RWPE1 (cell line): ENCODE measurements at regions of chr7 and their contacts with region 1.

Region 1: GRCh38 chr7:37181550-37181932 is 267.1 kb downstream of the ELMO1 start:
- DNase-seq: no peak
- H3K27ac ChIP-seq: no peak overlapping the region
- CTCF ChIP-seq: no peak

Region 2: DNA sequence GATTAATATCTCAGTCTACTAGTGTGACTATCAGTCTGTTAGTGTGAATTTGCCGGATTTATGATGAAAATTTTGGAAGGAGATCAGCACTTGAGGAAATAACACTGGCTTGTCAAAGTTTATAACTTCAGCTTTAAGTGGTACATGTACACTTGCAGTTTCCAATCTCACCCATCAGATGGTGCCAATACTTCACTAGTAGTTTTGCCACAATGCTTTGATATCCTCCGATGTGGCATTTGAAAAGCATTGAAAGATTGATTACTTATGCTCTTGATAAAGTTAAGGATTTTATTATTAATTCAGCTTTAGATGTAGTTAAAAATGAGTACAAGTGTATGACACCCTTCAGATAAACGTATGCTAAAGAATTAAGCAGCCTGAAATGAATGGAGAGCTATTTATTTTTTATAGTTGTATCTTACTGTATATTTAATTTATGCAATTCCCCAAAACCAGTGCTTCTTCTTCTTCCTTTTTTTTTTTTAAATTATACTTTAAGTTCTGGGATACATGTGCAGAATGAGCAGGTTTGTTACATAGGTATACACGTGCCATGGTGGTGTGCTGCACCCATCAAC is 693.7 kb before region 1 on chr7:
- CTCF ChIA-PET with region 1: interaction called, 16 read pairs
- POLR2A ChIA-PET with region 1: no interaction called
- DNase-seq: peak; percentile 60
- H3K27ac ChIP-seq: no peak overlapping the region
- CTCF ChIP-seq: peak; percentile 84

Region 3: DNA sequence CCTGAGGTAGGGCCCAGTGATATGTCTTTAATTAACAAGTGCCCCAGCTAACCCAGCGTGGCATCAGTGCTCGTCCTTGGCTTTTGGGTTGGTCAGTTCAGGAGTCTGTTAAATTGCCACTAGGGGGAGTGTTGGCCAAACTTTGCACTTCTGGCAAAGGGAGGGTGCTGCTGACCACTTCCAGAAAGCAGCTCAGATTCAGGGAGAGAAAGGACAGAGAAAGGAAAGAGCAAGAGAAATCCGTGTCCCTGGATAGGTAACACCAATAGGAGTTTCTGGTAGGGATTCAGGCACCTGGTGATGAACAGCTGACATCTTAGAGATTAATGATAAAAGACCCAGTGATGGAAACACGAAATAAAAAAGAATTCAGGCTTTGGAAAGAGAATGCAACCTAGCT is 214.2 kb before region 1 on chr7:
- CTCF ChIA-PET with region 1: interaction called, 67 read pairs
- POLR2A ChIA-PET with region 1: interaction called, 4 read pairs
- DNase-seq: peak; percentile 61
- H3K27ac ChIP-seq: no peak overlapping the region
- CTCF ChIP-seq: peak; percentile 82

Region 4: GRCh38 chr7:36986429-36987362 is 194.8 kb before region 1 on chr7:
- CTCF ChIA-PET with region 1: interaction called, 35 read pairs
- POLR2A ChIA-PET with region 1: no interaction called
- DNase-seq: peak; percentile 73
- H3K27ac ChIP-seq: no peak overlapping the region
- CTCF ChIP-seq: peak; percentile 86

Region 5: GRCh38 chr7:37208528-37208927 is 27.0 kb after region 1 on chr7:
- CTCF ChIA-PET with region 1: interaction called, 13 read pairs
- POLR2A ChIA-PET with region 1: no interaction called
- DNase-seq: peak; percentile 41
- H3K27ac ChIP-seq: no peak overlapping the region
- CTCF ChIP-seq: peak; percentile 68